ENCODE measurements at regions of chr2 and their contacts with region 1.

Region 1: GRCh38 chr2:230987137-230988020 is 8.5 kb upstream of the SPATA3 start:
- DNase-seq: peak; percentile 60 to 87 (median 80)
- H3K4me3 ChIP-seq: peak overlapping the region in 1 of 4 donors; percentile 48
- H3K27ac ChIP-seq: no peak overlapping the region
- H3K4me1 ChIP-seq: no peaks in the 10 kb centered on the region
- H3K27me3 ChIP-seq: peaks cover 27% of the 10 kb centered on the region
- CTCF ChIP-seq: peak; percentile 72 to 96 (median 90)
- POLR2A ChIP-seq: no peak

Region 2: GRCh38 chr2:230824406-230824978 is 162.9 kb before region 1 on chr2:
- intact Hi-C with region 1: loop called (anchors 2 to 5 kb)
- DNase-seq: peak; percentile 53 to 78 (median 59)
- H3K4me3 ChIP-seq: peak overlapping the region in 1 of 4 donors; percentile 48
- H3K27ac ChIP-seq: no peak overlapping the region
- H3K4me1 ChIP-seq: peaks cover 0 to 6% of the 10 kb centered on the region in 2 donors
- H3K27me3 ChIP-seq: peaks cover 15% of the 10 kb centered on the region
- CTCF ChIP-seq: peak; percentile 63 to 78 (median 74)
- POLR2A ChIP-seq: no peak

Region 3: DNA sequence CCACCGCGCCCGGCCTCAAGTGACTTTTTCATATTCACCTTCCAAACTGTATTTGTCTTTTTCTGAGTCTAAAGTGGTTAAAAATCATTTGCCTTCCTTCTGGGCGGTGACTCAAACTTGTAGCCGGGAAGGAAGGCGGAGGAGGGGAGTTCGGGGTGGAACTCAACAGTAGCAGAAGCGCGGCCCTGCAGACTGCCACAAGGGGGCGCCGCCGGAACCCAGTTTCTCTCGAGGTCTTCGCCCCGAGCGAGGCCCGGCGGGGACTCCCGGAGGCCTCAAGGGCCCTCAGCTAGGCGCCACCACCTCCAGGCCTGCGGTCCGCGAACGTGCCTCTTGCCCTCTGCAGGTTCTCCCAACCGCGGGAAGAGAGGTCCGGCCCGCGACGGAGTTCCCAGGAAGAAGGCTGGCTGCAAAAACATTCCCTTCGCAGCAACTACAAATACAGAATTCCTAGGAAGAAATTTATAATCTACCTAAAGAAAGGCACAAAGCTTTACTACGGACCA is 139.4 kb before region 1 on chr2:
- intact Hi-C with region 1: loop called (anchors 5 kb)
- DNase-seq: peak; percentile 80 to 93 (median 90)
- H3K4me3 ChIP-seq: no peak overlapping the region
- H3K27ac ChIP-seq: no peak overlapping the region
- H3K4me1 ChIP-seq: no peaks in the 10 kb centered on the region
- H3K27me3 ChIP-seq: no peaks in the 10 kb centered on the region
- CTCF ChIP-seq: peak; percentile 63 to 91 (median 84)
- POLR2A ChIP-seq: no peak

Region 4: GRCh38 chr2:230902180-230902899 is 85.0 kb before region 1 on chr2:
- intact Hi-C with region 1: loop called (anchors 5 to 10 kb)
- DNase-seq: peak; percentile 15 to 54 (median 40)
- H3K4me3 ChIP-seq: no peak overlapping the region
- H3K27ac ChIP-seq: no peak overlapping the region
- H3K4me1 ChIP-seq: no peaks in the 10 kb centered on the region
- H3K27me3 ChIP-seq: no peaks in the 10 kb centered on the region
- CTCF ChIP-seq: peak; percentile 26 to 58 (median 52)
- POLR2A ChIP-seq: no peak

Measured in adrenal gland (tissue), 19 donors.